ENCODE measurements at regions of chr5 and their contacts with region 1.

Region 1: DNA sequence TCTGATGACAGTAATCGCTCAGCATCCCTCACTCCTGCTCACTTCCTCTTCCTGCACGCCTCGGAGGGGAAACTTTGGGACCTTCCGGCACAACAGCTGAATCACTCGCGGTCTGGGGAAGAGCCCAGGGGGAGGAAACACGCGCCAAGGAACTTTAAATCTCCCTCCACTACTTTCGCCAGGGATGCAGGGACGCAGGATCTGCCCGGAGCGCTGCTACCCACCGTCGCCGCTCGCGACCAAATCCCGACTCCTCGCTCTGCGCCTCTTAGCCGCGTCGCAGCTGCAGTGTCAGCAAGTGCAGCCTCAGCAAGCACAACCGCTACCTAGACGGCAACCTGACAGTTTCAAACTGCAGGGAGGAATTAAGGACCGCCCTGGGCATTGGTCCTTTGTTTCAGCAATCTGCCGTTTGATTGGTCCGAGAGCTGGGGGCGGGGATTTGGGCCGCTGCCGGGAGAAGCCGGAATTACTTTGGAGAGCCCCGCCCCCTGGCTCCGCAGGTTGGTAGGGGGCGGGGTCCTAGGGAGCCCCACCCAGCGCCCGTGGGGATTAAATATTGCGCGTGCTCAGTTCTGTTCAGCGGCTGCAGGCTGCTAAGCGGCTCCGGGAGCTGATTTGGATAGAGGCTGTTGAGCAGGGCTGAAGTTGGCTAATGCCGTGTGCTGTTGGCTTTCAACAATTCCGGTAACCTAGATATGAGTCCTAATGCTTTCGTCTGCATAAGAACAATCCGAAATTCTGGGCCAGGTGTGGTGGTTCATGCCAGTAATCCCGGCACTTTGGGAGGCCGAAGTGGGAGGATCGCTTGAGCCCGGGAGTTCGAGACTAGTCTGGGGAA is at the start of gene POC5:
- DNase-seq: peak; percentile 96 to 99 (median 98)
- ATAC-seq: peak; percentile 95
- H3K4me3 ChIP-seq: peak within 1 kb of the TSS; percentile 82 to 93
- H3K4me3 Mint-ChIP-seq: peak within 1 kb of the TSS; percentile 100
- H3K27ac ChIP-seq: peak within 1 kb of the TSS; percentile 69 to 88
- H3K27ac Mint-ChIP-seq: peak within 1 kb of the TSS; percentile 98
- H3K4me1 ChIP-seq: peaks cover 11% of the 10 kb centered on the region
- H3K4me1 Mint-ChIP-seq: peaks cover 39% of the 10 kb centered on the region
- H3K27me3 ChIP-seq: no peaks in the 10 kb centered on the region
- H3K27me3 Mint-ChIP-seq: no peaks in the 10 kb centered on the region
- CTCF ChIP-seq: no peak
- total RNA-seq, gene POC5: 6.5 to 7.9 TPM

Region 2: GRCh38 chr5:77030097-77031071 is 1313.1 kb after region 1 on chr5 and contains the start of gene AGGF1:
- CTCF ChIA-PET with region 1: no interaction called
- POLR2A ChIA-PET with region 1: no interaction called
- intact Hi-C with region 1: loop called in 1 of 2 experiments (anchors 5 kb)
- DNase-seq: peak; percentile 78 to 95 (median 92)
- ATAC-seq: peak; percentile 98
- H3K4me3 ChIP-seq: peak within 1 kb of the TSS; percentile 84 to 94
- H3K4me3 Mint-ChIP-seq: peak within 1 kb of the TSS; percentile 90
- H3K27ac ChIP-seq: peak within 1 kb of the TSS; percentile 69 to 85
- H3K27ac Mint-ChIP-seq: peak within 1 kb of the TSS; percentile 94
- H3K4me1 ChIP-seq: peaks cover 21% of the 10 kb centered on the region
- H3K4me1 Mint-ChIP-seq: peaks cover 43% of the 10 kb centered on the region
- H3K27me3 ChIP-seq: no peaks in the 10 kb centered on the region
- H3K27me3 Mint-ChIP-seq: no peaks in the 10 kb centered on the region
- CTCF ChIP-seq: no peak
- total RNA-seq, gene AGGF1: 14.8 to 14.9 TPM